CD4-positive, alpha-beta T cell (primary cell): ENCODE measurements at regions of chr1 and their contacts with region 1.

Region 1: DNA sequence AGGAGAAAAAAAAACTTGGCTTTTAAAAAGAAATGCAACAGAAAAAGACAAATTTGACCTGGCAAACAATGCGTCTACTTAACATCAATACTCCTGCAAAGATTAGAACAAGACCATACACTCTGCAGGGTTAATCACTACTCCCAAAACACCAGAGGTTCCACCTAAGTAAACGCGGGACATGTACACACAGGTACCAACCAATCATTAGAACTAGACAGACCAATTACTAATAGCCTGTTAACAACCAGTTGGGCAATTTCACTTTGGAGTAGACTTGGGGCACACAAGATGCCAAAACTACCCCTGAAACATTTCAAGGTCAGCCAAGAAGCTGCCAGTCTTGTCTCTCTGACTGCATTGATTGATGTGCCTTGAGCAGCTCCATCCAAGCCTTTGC is 125.8 kb downstream of the RRAGC start:
- DNase-seq: no peak
- ATAC-seq: no peak
- H3K4me3 ChIP-seq: no peak overlapping the region
- H3K4me3 Mint-ChIP-seq: no peak overlapping the region
- H3K27ac ChIP-seq: no peak overlapping the region
- H3K27ac Mint-ChIP-seq: no peak overlapping the region
- H3K4me1 ChIP-seq: no peaks in the 10 kb centered on the region
- H3K4me1 Mint-ChIP-seq: no peaks in the 10 kb centered on the region
- H3K27me3 ChIP-seq: peaks cover 23 to 26% of the 10 kb centered on the region in 2 experiments
- H3K27me3 Mint-ChIP-seq: peaks cover 61% of the 10 kb centered on the region
- CTCF ChIP-seq: no peak

Region 2: GRCh38 chr1:38746941-38747600 is 13.3 kb after region 1 on chr1:
- CTCF ChIA-PET with region 1: no interaction called
- POLR2A ChIA-PET with region 1: no interaction called
- intact Hi-C with region 1: loop called in 1 of 2 experiments (anchors 1 kb)
- DNase-seq: no peak
- ATAC-seq: no peak
- H3K4me3 ChIP-seq: peak overlapping the region; percentile 7
- H3K4me3 Mint-ChIP-seq: peak overlapping the region; percentile 23
- H3K27ac ChIP-seq: no peak overlapping the region
- H3K27ac Mint-ChIP-seq: no peak overlapping the region
- H3K4me1 ChIP-seq: no peaks in the 10 kb centered on the region
- H3K4me1 Mint-ChIP-seq: no peaks in the 10 kb centered on the region
- H3K27me3 ChIP-seq: peaks cover 0 to 12% of the 10 kb centered on the region in 2 experiments
- H3K27me3 Mint-ChIP-seq: peaks cover 27% of the 10 kb centered on the region
- CTCF ChIP-seq: no peak

Region 3: DNA sequence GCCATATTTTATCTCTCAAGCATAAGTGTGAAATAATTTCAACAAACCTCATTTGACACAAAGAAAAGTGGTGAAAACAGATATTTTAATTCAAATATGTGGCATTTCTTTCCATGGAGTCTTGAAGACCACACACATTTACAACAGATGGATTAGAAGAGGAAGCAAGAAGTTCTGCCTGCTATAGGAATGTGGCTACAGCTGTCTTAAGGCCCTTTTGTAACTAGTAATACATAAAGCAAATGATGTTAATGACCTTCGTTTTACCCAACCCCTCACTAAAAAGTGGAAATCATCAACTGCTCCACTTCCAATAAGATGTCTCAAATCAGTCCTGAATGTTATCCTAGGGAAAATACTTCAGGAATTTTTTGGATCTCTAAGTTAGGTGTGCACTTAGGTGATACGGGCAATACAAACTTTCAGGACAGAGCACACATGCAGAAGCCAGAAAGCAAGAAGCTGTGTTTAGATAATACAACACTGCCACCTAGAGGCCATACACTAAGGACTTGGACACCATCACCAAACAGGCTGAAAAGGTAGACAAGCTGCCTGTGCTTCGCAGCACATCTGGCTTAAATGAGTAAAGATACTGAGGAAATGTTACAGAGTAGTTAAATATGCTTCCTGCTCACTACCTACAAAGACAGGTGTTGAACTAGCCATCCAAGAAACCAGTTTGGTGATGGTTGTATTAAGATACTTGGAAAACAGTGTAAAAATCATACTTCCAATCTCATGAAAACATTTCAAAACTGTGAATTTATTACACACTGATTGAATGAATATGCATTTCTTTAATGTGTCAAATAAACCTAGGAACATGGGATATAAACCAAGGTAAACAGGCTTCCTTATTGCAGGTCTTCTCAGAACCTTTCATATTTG is 101.4 kb after region 1 on chr1:
- CTCF ChIA-PET with region 1: no interaction called
- POLR2A ChIA-PET with region 1: no interaction called
- intact Hi-C with region 1: no loop called
- DNase-seq: peak in 8 of 14 experiments; percentile 9 to 87 (median 46)
- ATAC-seq: peak; percentile 84
- H3K4me3 ChIP-seq: no peak overlapping the region
- H3K4me3 Mint-ChIP-seq: no peak overlapping the region
- H3K27ac ChIP-seq: no peak overlapping the region
- H3K27ac Mint-ChIP-seq: no peak overlapping the region
- H3K4me1 ChIP-seq: no peaks in the 10 kb centered on the region
- H3K4me1 Mint-ChIP-seq: peaks cover 7% of the 10 kb centered on the region
- H3K27me3 ChIP-seq: no peaks in the 10 kb centered on the region
- H3K27me3 Mint-ChIP-seq: peaks cover 8% of the 10 kb centered on the region
- CTCF ChIP-seq: peak; percentile 93